Mammary epithelial cell (primary cell): ENCODE measurements at regions of chr13 and their contacts with region 1.

Region 1: DNA sequence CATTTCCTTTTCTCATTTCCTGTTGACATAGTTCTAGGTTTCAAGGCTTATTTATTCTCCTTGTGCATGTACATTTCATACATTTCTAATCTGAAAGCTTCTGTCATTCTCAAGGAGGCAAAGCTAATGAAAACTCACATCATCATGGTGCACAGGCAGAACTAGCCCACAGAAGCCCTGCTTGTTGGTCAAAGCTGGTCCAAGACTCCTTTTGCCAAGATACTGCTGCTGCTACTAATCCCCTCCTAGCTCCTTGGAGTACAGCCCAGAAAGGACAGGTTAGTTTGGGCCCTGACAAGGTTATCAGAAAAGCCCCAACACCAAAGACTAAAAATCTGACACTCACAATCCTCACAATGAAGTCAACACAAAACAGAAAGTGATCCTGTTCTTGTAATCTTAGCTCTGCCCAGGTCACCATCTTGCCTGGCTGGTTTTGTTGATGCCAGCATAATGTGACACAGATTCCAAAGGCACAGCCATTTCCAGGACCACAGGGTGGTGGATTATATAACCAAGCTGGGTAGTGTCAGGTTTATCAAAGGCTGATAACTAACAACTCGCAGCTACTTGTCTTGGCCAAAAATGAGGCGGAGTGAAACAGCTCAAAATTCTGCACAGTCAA is 417.4 kb downstream of the NDFIP2 start:
- DNase-seq: no peak
- H3K4me3 ChIP-seq: no peak overlapping the region
- H3K27ac ChIP-seq: no peak overlapping the region
- H3K4me1 ChIP-seq: peaks cover 3% of the 10 kb centered on the region
- H3K27me3 ChIP-seq: no peaks in the 10 kb centered on the region
- CTCF ChIP-seq: no peak

Region 2: DNA sequence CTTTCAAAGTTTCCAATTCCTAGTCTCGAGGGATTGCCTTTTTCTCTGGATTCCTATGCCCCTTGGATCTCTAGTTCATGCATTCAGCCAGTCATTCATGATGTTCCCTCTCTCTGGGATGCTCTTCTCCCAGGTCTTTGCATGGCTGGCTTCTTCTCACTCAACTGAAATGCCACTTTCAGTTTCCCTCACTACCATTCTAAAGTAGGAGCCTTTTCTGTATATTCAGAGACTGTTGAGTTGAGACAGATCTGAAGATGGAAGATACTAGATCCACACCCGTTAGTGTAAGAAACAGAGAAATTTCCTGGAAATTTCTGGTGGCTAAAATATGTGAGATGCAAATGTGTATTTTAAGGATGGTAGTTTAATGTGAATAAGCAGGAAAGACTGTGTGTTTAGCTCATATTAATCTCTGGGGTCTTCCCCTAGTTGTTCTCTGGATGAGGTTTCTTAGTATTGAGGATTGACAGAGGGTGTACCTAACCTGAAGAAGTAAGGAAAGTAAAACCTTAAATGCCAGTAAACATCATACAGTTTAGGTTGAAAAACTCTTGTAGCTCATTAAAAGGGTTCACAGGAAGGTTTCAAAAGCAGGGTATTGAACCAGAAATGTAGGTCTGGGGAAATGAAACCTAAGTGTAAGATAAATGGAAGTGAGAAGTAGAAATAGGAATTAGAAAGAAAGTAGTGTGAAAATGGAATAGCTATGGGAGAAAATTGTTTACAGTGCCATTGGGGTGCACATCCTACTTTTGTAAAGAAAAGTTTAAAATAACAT is 86.1 kb before region 1 on chr13:
- CTCF ChIA-PET with region 1: interaction called, 12 read pairs
- dilution Hi-C with region 1: no loop called
- in situ Hi-C with region 1: no loop called
- intact Hi-C with region 1: no loop called
- DNase-seq: no peak
- H3K4me3 ChIP-seq: no peak overlapping the region
- H3K27ac ChIP-seq: no peak overlapping the region
- H3K4me1 ChIP-seq: peaks cover 9% of the 10 kb centered on the region
- H3K27me3 ChIP-seq: no peaks in the 10 kb centered on the region
- CTCF ChIP-seq: no peak